PC-9 (cell line): ENCODE measurements at regions of chr6 and their contacts with region 1.

Region 1: DNA sequence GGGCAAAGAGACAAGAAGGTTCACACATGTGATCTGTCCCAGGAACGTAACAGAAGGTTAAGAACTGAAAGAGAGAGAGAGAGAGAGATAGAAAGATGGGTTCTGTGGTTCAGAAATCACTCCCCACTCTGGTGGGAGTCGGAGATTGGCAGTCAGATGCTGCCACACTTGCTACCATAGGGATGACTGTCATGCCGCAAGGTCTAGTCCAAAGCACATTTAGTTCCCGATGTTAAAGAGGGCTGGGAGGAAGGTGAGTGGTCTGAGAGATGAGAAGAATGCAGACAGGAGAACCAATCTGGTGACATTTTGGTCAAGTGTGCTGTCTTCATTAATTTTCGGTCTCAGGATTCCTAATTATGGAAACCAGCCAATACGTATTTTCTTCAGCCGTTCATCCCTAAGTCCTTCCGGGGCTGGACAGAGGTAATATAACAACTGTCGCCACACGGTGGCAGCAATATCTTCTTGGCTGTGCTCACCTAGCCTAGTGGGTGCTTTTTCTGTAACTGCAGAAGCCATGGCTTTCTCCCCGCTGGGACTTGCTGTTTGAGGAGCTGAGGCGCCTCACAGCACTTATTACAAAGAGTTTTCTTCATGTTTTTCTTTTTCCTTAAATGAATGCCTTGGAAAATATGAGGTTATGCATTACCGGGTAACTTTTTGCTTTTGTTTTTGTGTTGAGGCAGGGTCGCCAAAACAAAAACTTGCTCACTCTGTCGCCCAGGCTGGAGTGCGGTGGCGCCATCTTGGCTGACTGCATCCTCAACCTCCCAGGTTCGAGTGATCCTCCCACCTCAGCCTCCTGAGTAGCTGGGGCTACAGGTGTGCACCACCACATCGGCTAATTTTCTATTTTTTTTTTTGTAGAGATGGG is 46.0 kb downstream of the SLC35D3 start:
- DNase-seq: peak; percentile 68 to 80
- H3K4me3 ChIP-seq: no peak overlapping the region
- H3K27ac ChIP-seq: peak overlapping the region; percentile 97
- H3K4me1 ChIP-seq: peaks cover 37% of the 10 kb centered on the region
- H3K27me3 ChIP-seq: no peaks in the 10 kb centered on the region
- CTCF ChIP-seq: peak; percentile 90

Region 2: DNA sequence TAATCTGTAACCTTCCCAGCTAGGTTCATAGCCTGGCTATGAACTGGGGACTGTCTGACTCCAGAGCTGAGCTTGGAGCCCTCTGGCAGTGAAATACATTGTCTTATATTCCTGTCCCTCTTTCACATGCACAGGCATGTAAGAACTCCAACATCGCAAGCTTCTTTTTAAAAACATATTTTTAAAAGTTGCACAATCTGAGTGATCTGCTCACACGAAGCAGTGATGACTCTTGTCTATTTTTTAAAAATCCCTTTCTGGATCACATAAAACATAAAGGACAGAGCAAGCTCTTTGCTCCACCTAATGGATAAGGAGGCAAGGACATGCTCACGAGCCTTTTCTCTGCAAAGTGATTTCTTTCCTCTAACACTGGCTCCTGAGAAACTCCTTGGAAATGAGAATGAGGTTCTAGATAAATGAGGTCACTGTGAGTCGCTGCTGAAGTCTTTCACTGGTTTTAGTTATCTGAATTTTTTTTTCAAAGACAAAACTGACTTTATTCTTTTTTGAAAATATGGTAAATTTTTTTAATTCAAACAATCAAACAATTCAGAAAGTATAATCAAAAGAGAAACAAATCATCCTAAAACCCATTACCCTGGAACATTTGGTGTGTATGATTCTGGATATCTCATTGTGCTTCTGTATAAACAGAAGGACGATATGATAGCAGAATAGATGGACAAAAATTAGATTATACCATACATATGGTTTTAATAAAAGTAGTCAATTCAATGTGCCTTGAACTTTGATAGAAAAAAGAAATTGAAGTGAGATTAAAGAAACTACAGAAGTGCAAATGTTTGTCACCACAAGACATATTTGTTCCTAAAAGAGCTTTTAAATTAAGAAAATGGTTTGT is 45.9 kb after region 1 on chr6:
- CTCF ChIA-PET with region 1: interaction called, 5 read pairs
- POLR2A ChIA-PET with region 1: no interaction called
- intact Hi-C with region 1: loop called (anchors 1 kb)
- DNase-seq: peak; percentile 15 to 52
- H3K4me3 ChIP-seq: no peak overlapping the region
- H3K27ac ChIP-seq: peak overlapping the region; percentile 1; the same call in 1 of the 2 replicates
- H3K4me1 ChIP-seq: peaks cover 34% of the 10 kb centered on the region
- H3K27me3 ChIP-seq: no peaks in the 10 kb centered on the region
- CTCF ChIP-seq: peak; percentile 81